ENCODE measurements at regions of chr3 and their contacts with region 1.

Region 1: GRCh38 chr3:59930170-59930569 is 880.3 kb upstream of the CFAP20DC start:
- DNase-seq: no peak
- ATAC-seq: no peak
- H3K4me3 ChIP-seq: no peak overlapping the region
- H3K4me3 Mint-ChIP-seq: no peak overlapping the region
- H3K27ac ChIP-seq: no peak overlapping the region
- H3K27ac Mint-ChIP-seq: no peak overlapping the region
- H3K4me1 ChIP-seq: peaks cover 14% of the 10 kb centered on the region
- H3K4me1 Mint-ChIP-seq: peaks cover 48% of the 10 kb centered on the region
- H3K27me3 ChIP-seq: peaks cover 0 to 2% of the 10 kb centered on the region in 2 experiments
- H3K27me3 Mint-ChIP-seq: no peaks in the 10 kb centered on the region
- CTCF ChIP-seq: no peak

Region 2: DNA sequence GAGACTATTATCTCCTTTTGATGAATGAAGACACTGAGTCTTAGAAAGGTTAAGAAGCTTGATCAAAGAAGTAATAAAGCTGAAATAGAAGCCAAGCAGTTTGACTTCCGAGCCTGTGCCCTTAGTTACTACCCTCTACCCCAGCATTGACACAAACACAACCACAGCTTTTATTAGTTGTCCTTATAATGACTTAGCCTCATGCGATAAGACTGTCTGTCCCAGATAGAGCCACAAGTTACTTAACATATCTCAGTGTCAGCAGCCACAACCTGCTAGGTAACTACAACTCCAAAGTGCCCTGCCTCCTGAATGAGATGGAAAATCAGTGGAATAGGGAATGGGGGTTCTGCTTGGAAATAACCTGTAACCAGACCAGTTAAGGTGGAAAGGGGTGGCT is 98.8 kb before region 1 on chr3:
- CTCF ChIA-PET with region 1: no interaction called
- POLR2A ChIA-PET with region 1: no interaction called
- intact Hi-C with region 1: no loop called
- DNase-seq: no peak
- ATAC-seq: no peak
- H3K4me3 ChIP-seq: no peak overlapping the region
- H3K4me3 Mint-ChIP-seq: no peak overlapping the region
- H3K27ac ChIP-seq: no peak overlapping the region
- H3K27ac Mint-ChIP-seq: no peak overlapping the region
- H3K4me1 ChIP-seq: no peaks in the 10 kb centered on the region
- H3K4me1 Mint-ChIP-seq: no peaks in the 10 kb centered on the region
- H3K27me3 ChIP-seq: no peaks in the 10 kb centered on the region
- H3K27me3 Mint-ChIP-seq: no peaks in the 10 kb centered on the region
- CTCF ChIP-seq: no peak

Region 3: GRCh38 chr3:59968513-59969045 is 38.4 kb after region 1 on chr3:
- CTCF ChIA-PET with region 1: no interaction called
- POLR2A ChIA-PET with region 1: no interaction called
- intact Hi-C with region 1: loop called in 1 of 2 experiments (anchors 5 kb)
- DNase-seq: no peak
- ATAC-seq: no peak
- H3K4me3 ChIP-seq: no peak overlapping the region
- H3K4me3 Mint-ChIP-seq: no peak overlapping the region
- H3K27ac ChIP-seq: no peak overlapping the region
- H3K27ac Mint-ChIP-seq: no peak overlapping the region
- H3K4me1 ChIP-seq: no peaks in the 10 kb centered on the region
- H3K4me1 Mint-ChIP-seq: peaks cover 5% of the 10 kb centered on the region
- H3K27me3 ChIP-seq: no peaks in the 10 kb centered on the region
- H3K27me3 Mint-ChIP-seq: no peaks in the 10 kb centered on the region
- CTCF ChIP-seq: no peak

Measured in CD8-positive, alpha-beta T cell (primary cell).